Activated naive CD4-positive, alpha-beta T cell treated with anti-CD3 and anti-CD28 coated beads for 36 hours (primary cell): ENCODE measurements at regions of chr10 and their contacts with region 1.

Region 1: GRCh38 chr10:84152769-84153168 is 13.5 kb downstream of the GHITM start:
- DNase-seq: no peak
- H3K4me3 Mint-ChIP-seq: no peak overlapping the region
- H3K27ac Mint-ChIP-seq: peak overlapping the region; percentile 79
- H3K4me1 Mint-ChIP-seq: peaks cover 32% of the 10 kb centered on the region
- H3K27me3 Mint-ChIP-seq: no peaks in the 10 kb centered on the region

Region 2: GRCh38 chr10:83764681-83765080 is 388.1 kb before region 1 on chr10:
- CTCF ChIA-PET with region 1: no interaction called
- intact Hi-C with region 1: no loop called
- DNase-seq: no peak
- H3K4me3 Mint-ChIP-seq: no peak overlapping the region
- H3K27ac Mint-ChIP-seq: no peak overlapping the region
- H3K4me1 Mint-ChIP-seq: no peaks in the 10 kb centered on the region
- H3K27me3 Mint-ChIP-seq: no peaks in the 10 kb centered on the region

Region 3: GRCh38 chr10:84214612-84215235 is 62.0 kb after region 1 on chr10:
- CTCF ChIA-PET with region 1: interaction called, 6 read pairs
- intact Hi-C with region 1: loop called (anchors 1 kb)
- DNase-seq: peak; percentile 63
- H3K4me3 Mint-ChIP-seq: no peak overlapping the region
- H3K27ac Mint-ChIP-seq: no peak overlapping the region
- H3K4me1 Mint-ChIP-seq: no peaks in the 10 kb centered on the region
- H3K27me3 Mint-ChIP-seq: no peaks in the 10 kb centered on the region